HCT116 (cell line): ENCODE measurements at regions of chr20 and their contacts with region 1.

Region 1: DNA sequence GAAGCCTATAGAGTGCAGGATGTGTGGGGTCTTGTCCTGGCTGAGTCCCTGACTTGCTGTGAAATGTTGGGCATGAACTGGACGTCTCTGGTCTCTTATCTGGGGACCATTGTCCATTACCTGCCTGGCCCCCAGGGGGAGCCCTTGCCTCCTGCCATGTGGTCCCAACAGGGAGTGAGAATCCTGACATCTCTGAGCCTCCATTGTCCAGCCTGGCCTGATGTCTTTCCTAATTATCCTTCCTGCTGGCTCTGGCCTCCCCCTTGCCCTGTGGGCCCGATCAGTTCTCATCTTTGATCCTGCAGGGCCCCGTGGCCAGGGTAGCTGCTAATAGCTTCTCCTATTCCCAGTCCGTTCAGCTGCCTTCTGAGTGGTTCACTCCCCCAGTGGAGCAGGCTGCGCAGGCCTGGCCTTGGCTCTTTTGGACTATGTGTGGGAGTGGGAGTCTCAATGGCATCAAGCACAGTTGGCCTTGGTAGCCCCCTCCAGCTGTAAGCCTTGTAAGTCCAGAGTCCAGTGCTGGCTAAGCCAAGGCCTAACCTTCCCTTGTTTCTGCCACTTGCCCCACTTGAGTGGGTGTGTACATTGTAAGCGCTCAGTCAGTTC is 77.9 kb upstream of the RALY start:
- DNase-seq: peak; percentile 15
- ATAC-seq: peak; percentile 86
- H3K4me3 ChIP-seq: no peak overlapping the region
- H3K27ac ChIP-seq: no peak overlapping the region
- H3K4me1 ChIP-seq: peaks cover 12 to 24% of the 10 kb centered on the region in 2 experiments
- H3K27me3 ChIP-seq: no peaks in the 10 kb centered on the region
- CTCF ChIP-seq: peak; percentile 38 to 90 (median 79); a peak in 5 of 6 replicates
- POLR2A ChIP-seq: no peak
- RAD21 ChIP-seq: peak; percentile 44; the same call in 1 of the 2 replicates

Region 2: DNA sequence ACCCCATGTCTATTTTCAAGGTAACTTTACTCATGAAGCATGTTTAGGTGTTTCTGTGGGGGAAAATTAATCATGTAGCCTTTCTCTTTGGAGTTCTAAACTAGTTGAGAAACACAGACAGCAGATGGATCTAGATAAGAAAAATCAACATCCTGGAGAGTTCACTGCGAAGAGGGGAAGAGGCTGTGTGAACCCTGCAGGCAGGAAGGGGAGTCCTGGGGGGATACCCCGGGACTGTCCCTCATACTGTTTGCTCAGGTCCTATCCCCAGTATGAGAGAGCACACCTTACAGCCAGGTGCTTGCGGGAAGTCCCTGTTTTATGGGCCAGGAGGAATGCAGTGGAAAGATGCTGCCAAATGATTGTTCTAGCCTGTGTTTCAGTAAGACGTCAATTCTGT is 72.0 kb before region 1 on chr20:
- CTCF ChIA-PET with region 1: no interaction called
- POLR2A ChIA-PET with region 1: no interaction called
- RAD21 ChIA-PET with region 1: no interaction called
- intact Hi-C with region 1: no loop called
- DNase-seq: no peak
- ATAC-seq: no peak
- H3K4me3 ChIP-seq: no peak overlapping the region
- H3K27ac ChIP-seq: no peak overlapping the region
- H3K4me1 ChIP-seq: no peaks in the 10 kb centered on the region
- H3K27me3 ChIP-seq: no peaks in the 10 kb centered on the region
- CTCF ChIP-seq: no peak
- POLR2A ChIP-seq: no peak
- RAD21 ChIP-seq: no peak

Region 3: GRCh38 chr20:33925867-33926266 is 10.0 kb after region 1 on chr20:
- CTCF ChIA-PET with region 1: interaction called, 12 read pairs
- POLR2A ChIA-PET with region 1: no interaction called
- RAD21 ChIA-PET with region 1: no interaction called
- intact Hi-C with region 1: no loop called
- DNase-seq: no peak
- ATAC-seq: no peak
- H3K4me3 ChIP-seq: no peak overlapping the region
- H3K27ac ChIP-seq: no peak overlapping the region
- H3K4me1 ChIP-seq: no peaks in the 10 kb centered on the region
- H3K27me3 ChIP-seq: no peaks in the 10 kb centered on the region
- CTCF ChIP-seq: no peak
- POLR2A ChIP-seq: no peak
- RAD21 ChIP-seq: no peak

Region 4: DNA sequence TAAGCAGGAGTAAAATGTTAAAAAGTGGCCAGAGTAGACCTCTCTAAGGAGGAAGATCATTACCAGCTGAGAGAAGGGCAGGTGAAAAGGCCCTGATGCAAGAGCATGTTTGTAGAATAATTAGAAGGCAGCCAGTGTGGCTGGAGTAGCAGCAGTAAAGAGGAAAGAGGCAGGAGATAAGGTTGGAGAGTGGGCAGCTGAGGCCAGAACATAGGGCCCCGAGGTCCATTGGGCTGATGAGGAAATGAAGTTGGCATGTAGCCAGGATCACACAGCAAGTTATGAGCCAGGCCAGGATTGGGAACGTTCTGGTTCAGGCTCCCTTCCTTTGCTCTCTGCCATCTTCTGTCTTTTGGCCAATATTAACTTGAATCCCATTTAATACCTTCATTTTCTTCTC is 129.5 kb after region 1 on chr20:
- CTCF ChIA-PET with region 1: no interaction called
- POLR2A ChIA-PET with region 1: no interaction called
- RAD21 ChIA-PET with region 1: no interaction called
- intact Hi-C with region 1: no loop called
- DNase-seq: no peak
- ATAC-seq: no peak
- H3K4me3 ChIP-seq: no peak overlapping the region
- H3K27ac ChIP-seq: no peak overlapping the region
- H3K4me1 ChIP-seq: no peaks in the 10 kb centered on the region
- H3K27me3 ChIP-seq: no peaks in the 10 kb centered on the region
- CTCF ChIP-seq: no peak
- POLR2A ChIP-seq: no peak
- RAD21 ChIP-seq: no peak